Posterior vena cava (tissue), 2 donors: ENCODE measurements at regions of chr6 and their contacts with region 1.

Region 1: DNA sequence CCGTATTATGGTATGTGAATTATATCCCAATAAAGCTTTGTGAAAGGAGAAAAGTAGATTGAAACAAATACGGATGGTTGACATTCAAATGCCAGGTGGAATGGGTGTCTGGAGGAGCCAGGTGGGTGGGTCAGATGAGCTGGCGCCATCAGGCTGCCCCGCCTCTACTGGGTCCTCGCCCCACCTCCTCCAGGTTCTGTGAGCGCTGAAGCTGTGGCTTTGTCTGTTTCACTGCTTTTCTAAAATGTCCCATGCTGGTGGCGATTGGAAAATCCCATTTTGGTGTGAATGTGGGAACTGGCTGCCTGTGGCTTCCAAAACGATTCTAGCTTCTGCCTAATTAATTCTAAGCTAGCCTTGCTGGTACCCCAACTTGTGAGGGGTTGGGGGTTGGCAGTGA is 16.5 kb downstream of the DUSP22 start:
- DNase-seq: peak; percentile 52

Region 2: GRCh38 chr6:277746-278145 is 31.0 kb before region 1 on chr6:
- intact Hi-C with region 1: loop called in 1 of 2 experiments (anchors 1 kb)
- DNase-seq: no peak

Region 3: GRCh38 chr6:422433-423054 is 113.8 kb after region 1 on chr6:
- intact Hi-C with region 1: no loop called
- DNase-seq: no peak